HCT116 (cell line): ENCODE measurements at regions of chr1 and their contacts with region 1.

Region 1: DNA sequence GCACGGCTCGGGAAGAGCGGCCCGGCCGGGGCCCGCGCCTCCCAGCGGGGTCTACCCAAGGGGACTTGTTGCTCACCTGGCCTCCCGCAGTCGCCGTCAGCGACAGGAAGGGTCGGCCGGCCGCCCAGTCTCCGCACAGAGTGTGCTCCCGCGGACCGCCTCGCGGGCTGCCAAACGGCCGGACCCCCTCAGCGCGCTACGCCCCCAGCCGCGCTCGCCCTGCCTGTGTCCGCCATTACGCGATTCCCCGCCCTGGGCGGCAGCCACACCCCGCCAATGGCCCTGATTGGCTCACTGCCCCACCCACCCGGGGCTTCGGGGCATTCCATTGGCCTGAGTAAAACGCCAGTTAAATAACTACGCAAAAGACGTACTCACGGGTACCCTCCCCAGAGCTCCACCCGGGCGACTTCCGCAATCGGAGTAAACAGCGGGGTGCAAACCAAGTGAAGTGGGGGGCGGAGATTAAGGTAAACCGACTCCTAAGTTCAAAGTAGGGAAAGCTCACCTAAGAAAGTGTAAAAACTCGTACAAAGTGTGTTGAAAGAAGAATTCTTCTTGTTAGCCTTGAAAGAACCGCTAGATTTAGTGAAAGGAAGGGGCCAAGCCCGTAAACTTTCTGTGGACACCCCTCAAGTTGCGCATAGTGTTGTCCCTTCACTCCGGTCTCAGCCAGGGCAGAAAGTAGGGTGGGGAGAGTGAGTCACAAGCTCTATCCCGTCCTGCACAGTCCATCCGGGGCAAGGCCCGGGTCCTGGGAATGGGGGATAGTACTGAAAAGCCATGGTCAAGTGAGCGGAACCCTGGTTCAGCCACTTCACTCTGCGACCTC is at the start of gene WASF2:
- DNase-seq: peak; percentile 95
- ATAC-seq: peak; percentile 93
- H3K4me3 ChIP-seq: peak within 1 kb of the TSS; percentile 69 to 99
- H3K27ac ChIP-seq: peak within 1 kb of the TSS; percentile 91
- H3K4me1 ChIP-seq: peaks cover 11 to 39% of the 10 kb centered on the region in 2 experiments
- H3K27me3 ChIP-seq: no peaks in the 10 kb centered on the region
- CTCF ChIP-seq: no peak
- POLR2A ChIP-seq: peak; percentile 95
- RAD21 ChIP-seq: no peak
- total RNA-seq, gene WASF2: 111 TPM

Region 2: GRCh38 chr1:27542408-27543273 is 52.5 kb after region 1 on chr1:
- CTCF ChIA-PET with region 1: no interaction called
- POLR2A ChIA-PET with region 1: no interaction called
- RAD21 ChIA-PET with region 1: no interaction called
- intact Hi-C with region 1: loop called (anchors 1 kb)
- DNase-seq: peak; percentile 99
- ATAC-seq: peak; percentile 82
- H3K4me3 ChIP-seq: peak overlapping the region; percentile 33 to 49
- H3K27ac ChIP-seq: peak overlapping the region; percentile 91
- H3K4me1 ChIP-seq: peaks cover 65 to 90% of the 10 kb centered on the region in 2 experiments
- H3K27me3 ChIP-seq: no peaks in the 10 kb centered on the region
- CTCF ChIP-seq: no peak
- POLR2A ChIP-seq: no peak
- RAD21 ChIP-seq: no peak